ENCODE measurements at regions of chr13 and their contacts with region 1.

Region 1: DNA sequence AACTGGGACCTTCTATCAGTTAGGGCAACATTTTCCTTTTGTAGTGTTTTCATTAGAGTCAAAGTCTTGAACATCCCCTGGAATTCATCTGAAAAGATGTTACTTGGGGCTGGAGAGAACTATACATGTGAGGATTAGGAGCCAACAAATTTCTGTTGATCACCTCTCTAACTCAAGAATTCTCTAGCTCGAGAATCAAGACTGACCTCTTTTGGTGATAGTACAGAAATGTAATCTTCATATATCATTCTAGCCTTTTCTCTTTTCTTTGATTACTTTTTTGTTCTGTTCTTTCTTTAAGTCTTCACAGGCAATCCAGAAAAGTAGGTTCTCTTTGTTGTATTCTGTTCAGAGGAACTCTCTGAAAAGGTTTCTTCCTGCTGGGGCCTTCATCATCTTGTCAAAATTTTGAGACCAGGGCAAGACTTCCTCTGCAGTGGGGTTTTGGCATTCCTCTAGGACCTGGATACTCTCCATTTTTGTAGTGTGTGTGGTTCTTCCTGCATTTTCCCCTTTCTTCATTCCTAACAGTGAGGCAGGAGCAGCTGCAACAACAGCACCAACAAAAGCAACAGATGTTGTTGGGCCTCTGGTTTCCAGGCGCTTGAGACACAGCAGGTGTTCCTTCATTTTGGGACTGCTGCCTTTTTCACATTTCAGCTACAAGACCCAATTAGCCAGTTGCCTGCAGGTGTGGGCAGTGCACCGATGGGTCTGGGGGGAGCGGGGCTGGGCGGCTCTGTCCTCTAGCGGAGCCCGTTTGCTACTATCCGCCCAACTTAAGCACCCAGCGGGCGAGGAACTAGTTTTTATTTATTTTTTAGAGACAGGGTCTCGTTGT is 26.2 kb downstream of the ELF1 start:
- DNase-seq: peak; percentile 28
- H3K4me3 ChIP-seq: no peak overlapping the region
- H3K27ac ChIP-seq: no peak overlapping the region
- H3K4me1 ChIP-seq: no peaks in the 10 kb centered on the region
- H3K27me3 ChIP-seq: no peaks in the 10 kb centered on the region
- CTCF ChIP-seq: no peak
- POLR2A ChIP-seq: no peak

Region 2: DNA sequence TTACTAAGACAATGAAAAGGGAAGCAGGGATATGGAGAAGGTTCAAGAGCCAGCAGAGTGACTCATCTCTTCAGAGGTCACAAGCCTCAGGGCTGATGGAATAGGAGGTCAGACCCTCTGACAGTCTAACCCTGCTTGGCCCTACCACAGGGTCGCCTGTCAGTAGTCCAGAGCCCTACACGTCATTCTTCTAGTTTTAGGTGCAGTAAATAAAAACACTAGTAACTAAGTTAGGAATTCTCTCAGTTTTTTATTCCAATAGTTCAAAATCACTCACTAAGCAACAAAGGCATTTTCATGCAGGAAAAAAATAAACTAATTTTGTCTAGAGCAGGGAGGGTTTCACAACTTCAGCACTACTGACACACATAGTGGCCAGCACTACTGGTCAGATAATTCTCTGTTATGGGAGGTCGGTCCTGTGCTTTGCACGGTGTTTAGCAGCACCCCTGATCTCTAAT is 353.6 kb before region 1 on chr13:
- CTCF ChIA-PET with region 1: no interaction called
- POLR2A ChIA-PET with region 1: interaction called, 10 read pairs
- dilution Hi-C with region 1: no loop called
- intact Hi-C with region 1: no loop called
- DNase-seq: peak; percentile 80
- H3K4me3 ChIP-seq: no peak overlapping the region
- H3K27ac ChIP-seq: peak overlapping the region; percentile 60
- H3K4me1 ChIP-seq: peaks cover 29% of the 10 kb centered on the region
- H3K27me3 ChIP-seq: no peaks in the 10 kb centered on the region
- CTCF ChIP-seq: no peak
- POLR2A ChIP-seq: no peak

Region 3: GRCh38 chr13:40940841-40941240 is 52.1 kb before region 1 on chr13:
- CTCF ChIA-PET with region 1: no interaction called
- POLR2A ChIA-PET with region 1: no interaction called
- dilution Hi-C with region 1: no loop called
- intact Hi-C with region 1: no loop called
- DNase-seq: no peak
- H3K4me3 ChIP-seq: no peak overlapping the region
- H3K27ac ChIP-seq: no peak overlapping the region
- H3K4me1 ChIP-seq: no peaks in the 10 kb centered on the region
- H3K27me3 ChIP-seq: no peaks in the 10 kb centered on the region
- CTCF ChIP-seq: no peak
- POLR2A ChIP-seq: no peak

Region 4: DNA sequence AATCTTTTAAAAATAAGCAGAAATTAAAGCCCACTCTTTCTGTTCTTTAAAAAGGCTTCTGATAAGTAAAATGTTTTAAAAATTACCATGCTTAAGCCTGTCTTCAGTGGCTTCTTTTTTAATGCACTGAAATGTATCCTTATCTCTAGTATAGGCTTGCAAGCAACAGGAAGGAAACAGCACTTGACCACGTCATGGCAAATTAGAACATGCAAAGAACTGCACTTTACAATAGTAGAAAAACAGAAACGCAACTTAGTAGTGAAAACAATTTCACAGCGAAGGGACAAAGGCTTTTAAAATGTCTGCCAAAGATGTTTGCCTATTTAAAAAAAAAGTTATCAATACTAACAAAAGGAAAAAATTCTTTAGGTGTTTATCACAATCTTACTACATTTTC is 10.1 kb before region 1 on chr13:
- CTCF ChIA-PET with region 1: interaction called, 3 read pairs
- POLR2A ChIA-PET with region 1: no interaction called
- dilution Hi-C with region 1: no loop called
- intact Hi-C with region 1: loop called (anchors 1 kb)
- DNase-seq: peak; percentile 95
- H3K4me3 ChIP-seq: peak overlapping the region; percentile 51 to 97 (median 91)
- H3K27ac ChIP-seq: peak overlapping the region; percentile 99
- H3K4me1 ChIP-seq: peaks cover 69% of the 10 kb centered on the region
- H3K27me3 ChIP-seq: no peaks in the 10 kb centered on the region
- CTCF ChIP-seq: no peak
- POLR2A ChIP-seq: peak; percentile 69